ENCODE measurements at regions of chr12 and their contacts with region 1.

Region 1: DNA sequence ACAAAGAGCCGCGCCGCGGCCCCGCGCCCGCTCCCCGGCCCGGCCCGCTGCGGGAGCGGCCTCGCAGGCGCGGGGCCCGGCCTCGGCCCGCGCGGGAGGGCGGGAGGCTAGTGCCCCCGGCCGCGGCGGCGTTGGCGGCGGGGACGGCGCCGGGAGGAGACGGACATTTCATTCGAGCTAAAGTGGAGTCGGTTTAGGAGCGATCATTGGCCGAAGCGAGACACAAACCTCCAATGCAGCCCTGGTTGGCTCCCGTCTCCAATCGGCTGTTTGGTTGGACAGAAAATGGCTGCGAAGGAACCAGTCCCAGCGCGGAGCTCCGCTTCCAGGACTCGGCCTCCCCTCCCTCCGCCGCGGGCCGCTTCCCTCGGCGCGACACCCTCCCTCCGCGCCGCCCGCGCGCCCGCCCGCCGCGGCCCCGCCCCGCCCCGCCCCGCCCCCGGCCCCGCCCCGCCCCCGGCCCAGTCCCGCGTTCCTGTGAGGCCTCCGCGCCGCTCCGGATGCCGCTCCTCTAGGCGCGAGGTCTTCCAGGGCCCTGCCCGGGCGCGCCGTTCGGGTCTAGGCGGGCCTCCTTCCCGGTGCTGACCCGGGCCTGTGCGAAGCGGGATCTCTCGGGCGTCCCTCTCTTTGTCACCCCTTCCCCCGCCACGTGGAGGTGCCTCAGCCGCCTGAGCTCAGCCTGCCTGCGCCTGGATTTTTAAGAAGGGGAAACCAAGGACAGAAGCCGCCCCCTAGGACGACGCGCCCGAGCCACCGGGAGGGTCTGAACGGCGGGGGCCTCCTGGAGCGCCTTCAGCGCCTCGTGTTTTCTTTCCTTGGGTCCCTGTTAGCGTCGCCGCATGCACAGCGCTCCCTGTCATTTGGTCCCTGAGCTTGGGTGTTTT is at the start of gene NFYB:
- DNase-seq: peak; percentile 90 to 97
- ATAC-seq: peak; percentile 89 to 97 (median 96)
- H3K4me3 ChIP-seq: peak within 1 kb of the TSS; percentile 53 to 96 (median 78)
- H3K27ac ChIP-seq: peak within 1 kb of the TSS; percentile 85 to 95 (median 89)
- H3K4me1 ChIP-seq: peaks cover 9 to 49% (median 40%) of the 10 kb centered on the region in 9 donors
- H3K27me3 ChIP-seq: no peaks in the 10 kb centered on the region
- CTCF ChIP-seq: peak in 1 of 9 donors; percentile 7
- total RNA-seq, gene NFYB: 16.1 to 53.9 (median 23.6) TPM

Region 2: GRCh38 chr12:103833891-103834290 is 304.3 kb before region 1 on chr12:
- intact Hi-C with region 1: no loop called
- DNase-seq: no peak
- ATAC-seq: no peak
- H3K4me3 ChIP-seq: no peak overlapping the region
- H3K27ac ChIP-seq: no peak overlapping the region
- H3K4me1 ChIP-seq: peaks cover 0 to 22% (median 0%) of the 10 kb centered on the region in 9 donors
- H3K27me3 ChIP-seq: no peaks in the 10 kb centered on the region
- CTCF ChIP-seq: no peak

Region 3: GRCh38 chr12:104286538-104287482 is 148.7 kb after region 1 on chr12:
- intact Hi-C with region 1: loop called in 1 of 10 experiments (anchors 5 kb)
- DNase-seq: peak; percentile 90 to 94
- ATAC-seq: peak; percentile 92 to 96 (median 94)
- H3K4me3 ChIP-seq: peak overlapping the region; percentile 50 to 83 (median 72)
- H3K27ac ChIP-seq: peak overlapping the region; percentile 80 to 97 (median 92)
- H3K4me1 ChIP-seq: peaks cover 8 to 40% (median 33%) of the 10 kb centered on the region in 9 donors
- H3K27me3 ChIP-seq: no peaks in the 10 kb centered on the region
- CTCF ChIP-seq: peak in 2 of 9 donors; percentile 7 to 11

Region 4: DNA sequence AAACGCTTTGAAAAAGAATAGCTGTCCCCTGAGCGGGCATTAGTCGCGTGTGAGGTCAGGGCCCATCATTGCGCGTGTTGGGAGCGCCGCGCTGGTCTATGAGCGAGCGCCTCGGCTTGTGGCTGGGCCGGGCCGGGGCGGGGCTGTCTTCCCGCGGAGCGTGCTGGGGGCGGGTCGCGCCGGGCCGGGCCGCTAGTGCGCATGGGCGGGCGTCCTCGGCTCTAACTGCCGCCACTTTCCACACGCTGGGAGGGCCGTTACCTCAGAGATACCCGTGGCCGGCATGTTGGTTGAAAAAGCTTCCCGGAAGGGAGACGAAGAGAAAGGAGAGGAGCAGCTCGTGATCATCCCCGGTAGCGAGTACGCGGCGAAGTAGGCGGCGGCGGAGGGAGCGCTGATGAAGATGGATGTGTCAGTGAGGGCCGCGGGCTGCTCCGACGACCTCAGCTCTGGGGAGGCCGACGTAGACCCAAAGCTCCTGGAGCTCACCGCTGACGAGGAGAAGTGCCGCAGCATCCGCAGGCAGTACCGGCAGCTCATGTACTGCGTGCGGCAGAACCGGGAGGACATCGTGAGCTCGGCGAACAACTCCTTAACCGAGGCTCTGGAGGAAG is 165.5 kb after region 1 on chr12 and contains the start of gene EID3:
- intact Hi-C with region 1: loop called in 1 of 10 experiments (anchors 10 kb)
- DNase-seq: peak; percentile 90 to 93
- ATAC-seq: peak; percentile 99 to 100 (median 100)
- H3K4me3 ChIP-seq: peak within 1 kb of the TSS; percentile 31 to 66 (median 56)
- H3K27ac ChIP-seq: peak within 1 kb of the TSS in 9 of 10 donors; percentile 42 to 80 (median 65)
- H3K4me1 ChIP-seq: peaks cover 0 to 72% (median 59%) of the 10 kb centered on the region in 9 donors
- H3K27me3 ChIP-seq: no peaks in the 10 kb centered on the region
- CTCF ChIP-seq: peak in 1 of 9 donors; percentile 6
- total RNA-seq, gene EID3: 0.52 to 1.6 (median 1.0) TPM